Esophagus muscularis mucosa (tissue), 4 donors: ENCODE measurements at regions of chr16 and their contacts with region 1.

Region 1: GRCh38 chr16:85610508-85611332 is 2.4 kb upstream of the GSE1 start:
- DNase-seq: peak; percentile 96
- H3K4me3 ChIP-seq: peak overlapping the region; percentile 71 to 94 (median 74)
- H3K27ac ChIP-seq: peak overlapping the region; percentile 87 to 92 (median 90)
- H3K4me1 ChIP-seq: peaks cover 61 to 86% (median 84%) of the 10 kb centered on the region in 4 donors
- H3K27me3 ChIP-seq: no peaks in the 10 kb centered on the region
- CTCF ChIP-seq: peak; percentile 97 to 99 (median 99)
- EP300 ChIP-seq: no peak
- POLR2A ChIP-seq: no peak

Region 2: DNA sequence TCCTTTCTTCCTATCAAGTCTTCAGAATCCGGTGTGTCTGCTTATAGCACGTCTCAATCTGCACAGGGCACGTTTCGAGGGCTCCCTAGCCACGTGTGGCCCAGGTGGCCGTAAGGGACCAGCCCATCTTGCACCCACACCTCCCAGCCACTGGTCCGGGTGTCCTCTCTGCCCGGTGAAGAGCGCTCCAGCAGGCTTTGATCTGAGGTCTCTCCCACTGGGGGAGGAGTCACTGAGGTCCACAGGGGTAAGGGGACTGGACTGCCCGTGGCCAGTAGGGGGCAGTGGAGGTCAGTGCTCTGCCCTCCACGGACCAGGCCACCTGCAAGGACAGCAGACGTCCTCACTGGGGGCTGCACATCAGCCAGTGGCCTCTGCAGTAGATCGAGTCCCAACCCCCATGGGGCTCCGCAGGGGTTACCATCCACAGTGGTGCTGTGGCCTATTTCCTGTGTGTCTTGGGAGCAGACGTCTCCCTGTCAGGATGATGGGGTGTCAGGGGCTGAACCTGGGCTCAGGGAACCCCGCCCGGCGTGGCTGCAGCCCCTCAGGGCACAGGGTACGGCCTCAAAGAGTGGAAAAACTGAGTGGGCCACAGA is 294.3 kb before region 1 on chr16:
- intact Hi-C with region 1: loop called (anchors 10 kb)
- DNase-seq: no peak
- H3K4me3 ChIP-seq: no peak overlapping the region
- H3K27ac ChIP-seq: no peak overlapping the region
- H3K4me1 ChIP-seq: peaks cover 21 to 86% (median 61%) of the 10 kb centered on the region in 4 donors
- H3K27me3 ChIP-seq: no peaks in the 10 kb centered on the region
- CTCF ChIP-seq: peak; percentile 70 to 87 (median 82)
- EP300 ChIP-seq: no peak
- POLR2A ChIP-seq: no peak

Region 3: DNA sequence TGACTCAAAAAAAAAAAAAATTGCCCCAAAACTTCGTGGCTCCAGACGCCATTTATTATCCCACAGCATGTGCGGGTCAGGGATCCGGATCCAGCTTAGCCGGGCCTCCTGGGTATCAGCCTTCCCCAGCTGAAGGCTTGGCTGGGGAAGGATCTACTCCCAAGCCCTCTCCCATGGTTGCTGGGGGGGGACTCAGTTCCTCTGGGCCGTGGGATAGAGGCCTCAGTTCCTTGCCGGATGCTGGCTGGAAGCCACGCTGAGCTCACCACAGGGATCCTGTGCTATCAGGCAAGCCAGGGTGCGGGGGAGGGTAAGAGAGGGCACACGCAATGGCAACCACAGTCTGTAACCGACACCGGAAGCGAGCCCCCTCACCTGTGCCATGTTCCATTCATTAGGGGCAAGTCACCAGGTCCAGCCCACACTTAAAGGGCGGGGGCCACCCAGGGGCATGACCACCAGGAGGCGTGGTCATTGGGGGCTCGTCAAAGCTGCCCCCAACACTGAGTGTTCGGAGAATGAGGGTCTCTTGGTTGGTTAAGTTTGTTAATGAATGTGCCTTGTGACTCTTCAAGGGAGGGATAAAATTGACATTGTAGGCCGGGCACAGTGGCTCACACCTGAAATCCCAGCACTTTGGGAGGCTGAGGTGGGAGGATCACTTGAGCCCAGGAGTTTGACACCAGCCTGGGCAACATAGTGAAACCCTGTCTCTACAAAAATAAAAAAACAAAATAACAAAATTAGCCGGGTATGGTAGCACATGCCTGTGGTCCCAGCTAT is 207.6 kb before region 1 on chr16:
- intact Hi-C with region 1: no loop called
- DNase-seq: no peak
- H3K4me3 ChIP-seq: no peak overlapping the region
- H3K27ac ChIP-seq: no peak overlapping the region
- H3K4me1 ChIP-seq: peaks cover 5 to 11% (median 7%) of the 10 kb centered on the region in 4 donors
- H3K27me3 ChIP-seq: no peaks in the 10 kb centered on the region
- CTCF ChIP-seq: no peak
- EP300 ChIP-seq: no peak
- POLR2A ChIP-seq: no peak

Region 4: DNA sequence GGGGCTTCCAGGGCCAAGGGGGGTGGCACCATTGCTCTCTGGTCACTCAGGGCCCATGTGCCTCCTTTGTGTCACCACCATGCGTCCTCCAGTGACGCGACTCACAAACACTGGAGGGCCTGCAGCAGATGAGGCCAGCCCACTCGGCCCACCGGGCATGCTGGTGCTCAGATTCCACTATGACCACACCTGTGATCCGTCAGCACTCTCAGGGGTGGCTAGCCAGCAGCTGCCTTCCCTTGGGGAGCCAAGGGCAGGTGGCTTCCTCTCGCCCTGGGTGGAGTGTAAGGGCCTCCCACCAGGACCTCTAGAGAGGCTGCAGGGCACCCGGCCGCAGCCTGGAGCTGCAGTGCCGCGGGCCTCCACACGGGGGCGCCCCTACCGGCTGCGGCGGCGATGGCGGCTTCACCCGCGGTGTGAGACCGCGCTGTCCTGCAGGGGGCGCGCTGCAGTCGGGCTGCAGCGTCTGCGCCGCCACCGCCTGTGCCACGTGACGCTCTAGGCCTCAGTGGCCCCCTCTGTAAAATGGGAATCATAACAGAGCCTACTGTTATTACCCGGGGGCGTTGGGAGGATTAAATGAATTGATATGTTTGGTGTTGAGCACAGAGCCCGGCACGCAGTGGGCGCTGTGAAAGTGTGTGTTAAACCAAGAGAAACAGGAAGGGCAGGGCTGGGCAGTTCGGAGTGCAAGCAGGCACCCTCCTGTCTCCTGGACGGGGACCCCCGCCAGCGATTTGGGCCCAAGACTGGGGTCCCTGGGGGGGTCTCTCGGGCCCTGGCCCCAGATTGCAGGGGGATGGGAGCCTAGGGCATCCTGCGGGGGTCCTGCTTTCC is 190.0 kb before region 1 on chr16:
- intact Hi-C with region 1: loop called (anchors 1 kb)
- DNase-seq: no peak
- H3K4me3 ChIP-seq: no peak overlapping the region
- H3K27ac ChIP-seq: no peak overlapping the region
- H3K4me1 ChIP-seq: peaks cover 9 to 39% (median 31%) of the 10 kb centered on the region in 4 donors
- H3K27me3 ChIP-seq: no peaks in the 10 kb centered on the region
- CTCF ChIP-seq: peak in 2 of 3 experiments; percentile 99
- EP300 ChIP-seq: no peak
- POLR2A ChIP-seq: no peak

Region 5: GRCh38 chr16:85554112-85554813 is 56.5 kb before region 1 on chr16:
- intact Hi-C with region 1: loop called (anchors 2 kb)
- DNase-seq: no peak
- H3K4me3 ChIP-seq: peak overlapping the region; percentile 74 to 85 (median 82)
- H3K27ac ChIP-seq: peak overlapping the region; percentile 79 to 88 (median 84)
- H3K4me1 ChIP-seq: peaks cover 31 to 75% (median 60%) of the 10 kb centered on the region in 4 donors
- H3K27me3 ChIP-seq: no peaks in the 10 kb centered on the region
- CTCF ChIP-seq: no peak
- EP300 ChIP-seq: no peak
- POLR2A ChIP-seq: no peak

Region 6: DNA sequence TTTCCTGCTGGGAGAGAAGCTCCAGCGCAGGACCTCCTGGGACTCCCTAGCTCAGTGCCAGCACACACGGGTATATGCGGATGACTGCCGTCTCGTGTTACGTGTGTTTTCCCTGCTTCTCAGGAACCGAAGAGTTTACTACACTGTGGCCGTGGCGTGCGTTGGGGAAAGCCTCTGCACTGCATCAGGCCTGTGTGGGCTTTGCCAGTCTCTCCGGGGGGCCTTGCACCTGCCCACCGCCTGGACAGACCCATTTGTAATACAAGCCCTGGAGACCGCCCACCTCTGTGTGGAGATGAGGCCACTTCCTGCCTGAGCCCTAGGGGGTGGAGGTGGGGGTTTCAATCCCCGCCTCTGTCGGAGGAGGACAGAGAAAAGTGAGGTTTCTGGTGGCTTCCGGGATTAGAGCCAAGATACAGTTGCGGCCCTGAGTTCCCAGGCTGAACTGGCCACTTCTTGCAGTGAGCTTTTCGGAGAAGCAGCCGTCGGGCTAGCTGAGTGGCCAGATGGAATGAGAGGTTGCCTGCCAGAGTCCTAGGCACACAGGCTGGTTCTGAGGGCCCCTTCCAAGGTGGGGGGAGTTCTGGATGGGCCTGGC is 41.0 kb before region 1 on chr16:
- intact Hi-C with region 1: no loop called
- DNase-seq: no peak
- H3K4me3 ChIP-seq: no peak overlapping the region
- H3K27ac ChIP-seq: peak overlapping the region in 2 of 4 donors; percentile 8 to 19
- H3K4me1 ChIP-seq: peaks cover 34 to 48% (median 47%) of the 10 kb centered on the region in 4 donors
- H3K27me3 ChIP-seq: no peaks in the 10 kb centered on the region
- CTCF ChIP-seq: no peak
- EP300 ChIP-seq: no peak
- POLR2A ChIP-seq: no peak